ENCODE measurements at regions of chr6 and their contacts with region 1.

Region 1: DNA sequence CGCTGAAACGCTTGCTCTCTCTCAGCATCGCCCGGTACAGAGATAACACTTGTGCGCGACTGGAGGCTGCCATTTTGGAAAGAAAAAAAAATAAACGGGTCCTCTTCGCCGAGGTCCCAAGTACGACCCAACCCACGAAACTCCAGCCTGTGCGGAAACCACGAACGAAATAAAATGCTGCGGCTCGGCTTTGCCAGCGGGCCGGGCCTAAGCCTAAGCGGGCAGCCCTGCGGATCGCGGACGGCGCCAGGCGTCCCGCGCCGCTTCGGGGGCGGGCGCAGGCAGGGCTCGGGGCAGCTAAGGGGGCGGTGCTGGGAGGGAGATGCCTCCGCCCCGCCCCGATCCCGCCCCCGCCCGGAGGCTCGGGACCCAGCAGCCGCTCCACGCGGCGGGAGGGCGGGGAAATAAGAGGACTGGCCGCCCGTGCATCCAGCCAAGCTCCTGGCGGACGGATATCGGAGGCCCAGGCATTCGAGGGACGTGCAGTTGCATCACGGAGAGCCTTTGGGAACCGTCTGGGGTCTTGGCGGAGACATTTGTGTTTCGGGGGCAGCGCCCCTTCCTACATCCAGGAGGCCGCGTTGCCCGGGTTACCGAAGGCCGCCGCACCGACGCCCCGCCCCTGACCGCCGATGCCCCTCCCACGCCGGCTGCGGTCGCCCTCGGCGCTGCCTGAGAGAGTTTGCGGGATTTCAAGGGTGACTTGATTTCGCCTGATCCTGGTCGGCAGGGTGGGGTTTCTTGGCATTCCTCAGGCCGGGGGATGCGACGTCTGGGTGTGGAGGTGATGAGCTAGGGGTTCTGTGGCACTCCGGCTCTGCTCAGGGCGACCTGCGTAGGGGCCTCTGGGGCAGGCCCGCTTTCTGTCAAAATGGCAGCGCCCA is at the starts of genes FARS2 and LYRM4:
- DNase-seq: peak; percentile 79
- ATAC-seq: peak; percentile 88
- H3K4me3 ChIP-seq: peak within 1 kb of the TSS; percentile 85 to 99 (median 86)
- H3K27ac ChIP-seq: peak within 1 kb of the TSS; percentile 98
- H3K4me1 ChIP-seq: peaks cover 47% of the 10 kb centered on the region
- H3K27me3 ChIP-seq: peaks cover 0 to 2% of the 10 kb centered on the region in 2 experiments; a peak in 1 of 5 replicates
- CTCF ChIP-seq: peak; percentile 39
- EP300 ChIP-seq: no peak
- POLR2A ChIP-seq: peak; percentile 63 to 76
- RAD21 ChIP-seq: peak; percentile 31; the same call in 1 of the 2 replicates
- total RNA-seq, gene FARS2: 26.0 and 28.0 TPM in 2 replicates
- total RNA-seq, gene LYRM4: 64.6 and 80.2 TPM in 2 replicates

Region 2: GRCh38 chr6:5095236-5095635 is 165.7 kb before region 1 on chr6:
- CTCF ChIA-PET with region 1: no interaction called
- POLR2A ChIA-PET with region 1: no interaction called
- in situ Hi-C with region 1: no loop called
- intact Hi-C with region 1: no loop called
- DNase-seq: no peak
- ATAC-seq: no peak
- H3K4me3 ChIP-seq: no peak overlapping the region
- H3K27ac ChIP-seq: no peak overlapping the region
- H3K4me1 ChIP-seq: peaks cover 24% of the 10 kb centered on the region
- H3K27me3 ChIP-seq: no peaks in the 10 kb centered on the region
- CTCF ChIP-seq: no peak
- EP300 ChIP-seq: no peak
- POLR2A ChIP-seq: no peak
- RAD21 ChIP-seq: no peak

Region 3: GRCh38 chr6:5205877-5206850 is 54.7 kb before region 1 on chr6:
- CTCF ChIA-PET with region 1: no interaction called
- POLR2A ChIA-PET with region 1: interaction called, 10 read pairs
- in situ Hi-C with region 1: no loop called
- intact Hi-C with region 1: no loop called
- DNase-seq: peak; percentile 95
- ATAC-seq: peak; percentile 96
- H3K4me3 ChIP-seq: peak overlapping the region in 1 of 3 experiments; percentile 21; a peak in 1 of 6 replicates
- H3K27ac ChIP-seq: peak overlapping the region; percentile 53
- H3K4me1 ChIP-seq: peaks cover 50% of the 10 kb centered on the region
- H3K27me3 ChIP-seq: no peaks in the 10 kb centered on the region
- CTCF ChIP-seq: no peak; the same call in 1 of the 2 replicates
- EP300 ChIP-seq: peak in 1 of 2 experiments; percentile 76; a peak in 2 of 4 replicates
- POLR2A ChIP-seq: no peak
- RAD21 ChIP-seq: no peak

Region 4: GRCh38 chr6:5302995-5303622 is 42.2 kb after region 1 on chr6:
- CTCF ChIA-PET with region 1: no interaction called
- POLR2A ChIA-PET with region 1: no interaction called
- in situ Hi-C with region 1: no loop called
- intact Hi-C with region 1: loop called (anchors 1 kb)
- DNase-seq: peak; percentile 73
- ATAC-seq: peak; percentile 100
- H3K4me3 ChIP-seq: no peak overlapping the region
- H3K27ac ChIP-seq: no peak overlapping the region
- H3K4me1 ChIP-seq: peaks cover 16% of the 10 kb centered on the region
- H3K27me3 ChIP-seq: no peaks in the 10 kb centered on the region
- CTCF ChIP-seq: peak; percentile 88
- EP300 ChIP-seq: no peak
- POLR2A ChIP-seq: no peak
- RAD21 ChIP-seq: peak; percentile 83

Region 5: DNA sequence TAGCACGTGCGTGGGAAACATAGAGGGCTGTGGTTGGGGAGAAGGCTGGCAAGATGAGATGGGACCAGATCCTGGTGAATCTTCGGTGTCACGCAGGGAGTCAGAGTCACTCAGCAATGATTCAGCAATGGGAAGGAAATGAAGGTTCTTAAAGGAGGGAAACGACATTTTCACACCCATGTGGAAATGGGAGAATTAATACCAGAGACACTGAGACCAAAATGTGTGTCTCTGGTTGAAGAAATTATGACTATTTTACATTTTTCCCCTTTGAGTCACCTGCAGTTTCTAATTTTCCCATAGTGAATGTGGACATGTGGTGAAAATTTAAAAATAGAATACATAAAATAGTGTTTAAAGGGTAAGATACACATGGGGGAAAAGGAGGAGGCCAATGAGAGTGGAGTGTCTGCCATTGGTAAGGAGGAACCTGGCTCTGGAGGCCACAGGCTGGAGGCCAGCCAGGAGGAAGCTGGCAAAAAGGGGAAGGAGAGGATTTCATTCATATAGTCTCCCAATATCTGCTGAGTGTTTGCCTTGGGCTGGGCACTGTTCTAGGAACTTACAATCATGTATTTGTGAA is 728.3 kb after region 1 on chr6:
- CTCF ChIA-PET with region 1: no interaction called
- POLR2A ChIA-PET with region 1: no interaction called
- in situ Hi-C with region 1: no loop called
- intact Hi-C with region 1: no loop called
- DNase-seq: no peak
- ATAC-seq: no peak
- H3K4me3 ChIP-seq: no peak overlapping the region
- H3K27ac ChIP-seq: no peak overlapping the region
- H3K4me1 ChIP-seq: no peaks in the 10 kb centered on the region
- H3K27me3 ChIP-seq: peaks cover 0 to 37% of the 10 kb centered on the region in 2 experiments; a peak in 2 of 5 replicates
- CTCF ChIP-seq: no peak
- EP300 ChIP-seq: no peak
- POLR2A ChIP-seq: no peak
- RAD21 ChIP-seq: no peak

Region 6: GRCh38 chr6:6890400-6890858 is 1629.5 kb after region 1 on chr6:
- CTCF ChIA-PET with region 1: no interaction called
- POLR2A ChIA-PET with region 1: no interaction called
- in situ Hi-C with region 1: no loop called
- intact Hi-C with region 1: no loop called
- DNase-seq: no peak
- ATAC-seq: peak; percentile 78
- H3K4me3 ChIP-seq: peak overlapping the region in 1 of 3 experiments; percentile 37; a peak in 2 of 6 replicates
- H3K27ac ChIP-seq: no peak overlapping the region
- H3K4me1 ChIP-seq: peaks cover 18% of the 10 kb centered on the region
- H3K27me3 ChIP-seq: 0 out of 5 replicates have a peak, but pooled peaks cover 0 to 6% of the 10 kb centered on the region in 2 experiments
- CTCF ChIP-seq: no peak
- EP300 ChIP-seq: no peak
- POLR2A ChIP-seq: no peak
- RAD21 ChIP-seq: no peak

Measured in HepG2 (cell line).